Common myeloid progenitor, CD34-positive (primary cell): ENCODE measurements at regions of chr11 and their contacts with region 1.

Region 1: DNA sequence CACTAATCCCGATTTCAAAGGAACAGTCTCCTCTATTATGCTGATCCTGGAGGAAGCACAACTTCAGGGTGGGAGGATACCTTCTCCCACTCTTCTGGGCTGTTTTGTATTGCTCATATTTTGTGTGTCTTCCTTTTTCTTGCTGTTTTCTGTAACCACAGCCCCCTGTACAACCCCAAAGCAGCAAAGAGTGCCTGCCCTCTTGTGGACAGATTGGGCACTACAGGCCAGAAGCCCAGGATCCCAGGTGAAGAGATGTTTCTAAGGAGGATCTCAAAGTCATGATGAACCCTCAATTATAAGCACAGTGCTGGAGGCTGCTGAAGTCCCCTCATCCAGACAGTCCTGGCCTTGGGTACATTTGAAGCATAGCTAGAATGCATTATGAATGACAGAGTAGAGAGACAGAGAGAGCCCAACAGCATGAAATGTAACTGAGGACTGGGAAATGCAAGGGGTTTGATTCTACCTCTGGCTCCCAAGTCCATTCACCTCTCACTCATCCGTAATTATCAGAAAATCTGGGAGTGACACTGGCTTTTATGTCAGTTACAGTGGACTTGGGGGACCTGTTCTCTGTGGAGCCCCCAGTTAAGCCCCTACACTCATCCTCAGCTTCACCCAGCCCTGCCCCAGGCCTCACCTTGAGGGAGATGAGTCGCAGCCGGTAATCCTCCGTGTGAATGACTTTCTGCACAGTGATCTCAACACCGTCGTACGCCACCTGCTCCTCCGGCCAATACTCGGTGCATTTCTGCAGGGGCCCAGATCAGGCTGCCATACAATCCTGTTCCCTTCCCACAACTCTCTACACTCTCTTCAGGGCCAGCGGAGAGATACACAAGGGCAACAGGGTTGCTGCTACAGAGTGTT is 6.2 kb upstream of the IGSF22 start:
- DNase-seq: peak; percentile 62 to 80 (median 69)
- H3K4me3 ChIP-seq: no peak overlapping the region
- H3K27ac ChIP-seq: no peak overlapping the region
- H3K4me1 ChIP-seq: peaks cover 2 to 15% (median 7%) of the 10 kb centered on the region in 4 experiments
- H3K27me3 ChIP-seq: no peaks in the 10 kb centered on the region

Region 2: GRCh38 chr11:18115360-18116127 is 616.6 kb before region 1 on chr11:
- CTCF ChIA-PET with region 1: interaction called, 21 read pairs
- POLR2A ChIA-PET with region 1: no interaction called
- DNase-seq: peak; percentile 73 to 81 (median 79)
- H3K4me3 ChIP-seq: no peak overlapping the region
- H3K27ac ChIP-seq: no peak overlapping the region
- H3K4me1 ChIP-seq: no peaks in the 10 kb centered on the region
- H3K27me3 ChIP-seq: peaks cover 2 to 18% (median 4%) of the 10 kb centered on the region in 5 experiments

Region 3: DNA sequence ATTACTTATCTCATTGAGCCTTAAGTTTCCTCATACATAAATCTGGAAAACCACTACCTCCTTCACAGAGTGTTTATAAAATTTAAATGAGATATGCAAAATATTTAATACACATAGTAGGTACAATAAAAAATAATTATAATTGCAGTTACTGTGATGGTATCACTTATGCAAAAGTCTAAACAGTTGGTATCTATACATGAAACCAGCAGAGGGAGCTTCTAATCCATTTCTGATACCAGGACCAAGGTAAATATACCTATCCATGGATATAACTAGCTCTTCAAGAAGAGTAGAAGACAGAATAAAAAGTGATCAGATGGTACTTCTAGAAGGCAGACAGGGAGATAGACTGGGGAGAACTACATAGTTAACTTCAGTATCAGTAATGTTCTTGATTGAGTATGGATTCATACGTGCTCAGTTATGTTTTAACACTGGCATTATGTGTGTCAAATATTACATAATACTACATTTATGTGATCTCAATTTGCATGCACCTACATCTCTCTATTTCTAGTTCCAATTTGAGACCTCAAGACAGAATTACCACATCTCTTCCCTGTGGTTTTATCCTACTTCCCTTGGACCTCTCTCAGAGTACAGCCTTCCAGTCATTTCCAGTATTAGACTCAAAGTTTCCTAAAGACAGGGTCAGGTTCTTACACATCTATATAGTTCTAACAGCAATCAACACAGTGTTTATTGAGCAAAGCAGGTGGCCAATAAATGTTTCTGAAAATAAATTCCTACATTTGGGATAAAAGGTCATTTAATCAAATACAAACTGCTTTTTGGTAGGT is 191.8 kb before region 1 on chr11:
- CTCF ChIA-PET with region 1: interaction called, 35 read pairs
- POLR2A ChIA-PET with region 1: no interaction called
- DNase-seq: peak; percentile 36 to 58 (median 52)
- H3K4me3 ChIP-seq: no peak overlapping the region
- H3K27ac ChIP-seq: no peak overlapping the region
- H3K4me1 ChIP-seq: no peaks in the 10 kb centered on the region
- H3K27me3 ChIP-seq: no peaks in the 10 kb centered on the region

Region 4: GRCh38 chr11:18721561-18722292 is 10.5 kb before region 1 on chr11:
- CTCF ChIA-PET with region 1: interaction called, 50 read pairs
- POLR2A ChIA-PET with region 1: no interaction called
- DNase-seq: peak; percentile 62 to 70 (median 65)
- H3K4me3 ChIP-seq: peak overlapping the region; percentile 38 to 88 (median 73)
- H3K27ac ChIP-seq: no peak overlapping the region
- H3K4me1 ChIP-seq: peaks cover 0 to 18% (median 14%) of the 10 kb centered on the region in 4 experiments
- H3K27me3 ChIP-seq: peaks cover 0 to 6% (median 0%) of the 10 kb centered on the region in 5 experiments

Region 5: DNA sequence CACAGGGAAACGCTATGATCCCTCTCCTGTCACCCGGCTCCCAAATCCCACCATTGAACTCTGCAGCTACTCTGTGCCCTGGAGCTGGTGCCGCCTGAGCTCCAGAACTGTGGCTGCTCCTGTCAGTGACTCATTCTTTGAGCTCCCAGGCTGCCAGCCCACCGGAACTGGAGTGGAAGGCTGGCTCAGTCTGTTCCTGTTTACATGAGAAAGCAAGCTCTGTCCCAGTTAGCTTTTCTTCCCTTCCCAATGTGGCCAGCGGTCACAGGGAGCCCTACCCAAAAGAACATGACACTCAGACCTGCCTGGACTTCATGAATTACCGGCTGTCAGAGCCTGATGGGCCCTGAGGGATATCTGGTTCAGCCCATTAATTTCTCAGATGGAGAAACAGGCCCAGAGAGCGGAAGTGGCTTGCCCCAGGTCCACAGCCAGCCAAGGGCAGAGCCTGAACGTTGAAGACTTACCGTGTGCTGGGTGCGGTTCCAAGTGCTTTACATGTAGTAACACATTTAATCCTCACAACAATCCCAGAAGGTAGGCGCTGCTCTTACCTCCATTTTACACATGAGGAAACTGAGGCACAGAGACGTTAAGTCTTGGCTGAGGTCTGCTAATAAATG is 17.6 kb after region 1 on chr11:
- CTCF ChIA-PET with region 1: interaction called, 19 read pairs
- POLR2A ChIA-PET with region 1: no interaction called
- DNase-seq: peak in 2 of 3 donors; percentile 42 to 56
- H3K4me3 ChIP-seq: no peak overlapping the region
- H3K27ac ChIP-seq: no peak overlapping the region
- H3K4me1 ChIP-seq: peaks cover 0 to 8% (median 3%) of the 10 kb centered on the region in 4 experiments
- H3K27me3 ChIP-seq: no peaks in the 10 kb centered on the region